Activated B cell treated with CpG ODN at 0.5 μM for 24 hours (primary cell): ENCODE measurements at regions of chr1 and their contacts with region 1.

Region 1: DNA sequence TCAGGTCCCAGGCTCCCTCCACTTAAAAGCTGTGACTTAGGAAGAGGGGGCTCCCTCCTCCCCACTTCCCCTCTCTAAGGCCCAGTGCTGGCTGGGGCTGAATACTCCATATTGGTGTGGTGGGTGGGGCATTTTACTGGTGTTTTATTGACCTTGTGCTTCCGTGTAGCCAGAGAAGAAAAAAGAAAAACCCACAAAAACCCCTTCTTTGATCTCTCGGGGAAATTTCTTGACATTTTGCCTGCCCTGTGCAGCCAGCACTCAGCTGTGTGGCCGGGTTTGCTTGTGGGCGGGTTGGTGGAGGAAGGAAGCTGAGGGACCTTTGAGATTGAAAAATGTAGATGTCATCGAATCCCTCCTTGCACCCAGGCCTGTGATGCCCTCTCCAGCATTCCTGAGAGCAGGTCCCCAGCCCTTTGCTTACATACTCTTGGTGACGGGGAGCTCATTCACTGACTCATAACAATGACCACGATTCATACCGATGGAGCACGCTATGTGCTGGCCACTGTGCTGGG is 24.8 kb downstream of the TNFRSF8 start:
- DNase-seq: peak; percentile 45
- ATAC-seq: peak; percentile 88
- H3K4me3 Mint-ChIP-seq: peak overlapping the region; percentile 53
- H3K27ac Mint-ChIP-seq: peak overlapping the region; percentile 95
- H3K4me1 Mint-ChIP-seq: peaks cover 45% of the 10 kb centered on the region
- H3K27me3 Mint-ChIP-seq: no peaks in the 10 kb centered on the region
- CTCF ChIP-seq: no peak

Region 2: GRCh38 chr1:11388617-11389016 is 699.2 kb before region 1 on chr1:
- CTCF ChIA-PET with region 1: no interaction called
- POLR2A ChIA-PET with region 1: no interaction called
- intact Hi-C with region 1: no loop called
- DNase-seq: no peak
- ATAC-seq: no peak
- H3K4me3 Mint-ChIP-seq: no peak overlapping the region
- H3K27ac Mint-ChIP-seq: no peak overlapping the region
- H3K4me1 Mint-ChIP-seq: no peaks in the 10 kb centered on the region
- H3K27me3 Mint-ChIP-seq: peaks cover 4% of the 10 kb centered on the region
- CTCF ChIP-seq: no peak

Region 3: DNA sequence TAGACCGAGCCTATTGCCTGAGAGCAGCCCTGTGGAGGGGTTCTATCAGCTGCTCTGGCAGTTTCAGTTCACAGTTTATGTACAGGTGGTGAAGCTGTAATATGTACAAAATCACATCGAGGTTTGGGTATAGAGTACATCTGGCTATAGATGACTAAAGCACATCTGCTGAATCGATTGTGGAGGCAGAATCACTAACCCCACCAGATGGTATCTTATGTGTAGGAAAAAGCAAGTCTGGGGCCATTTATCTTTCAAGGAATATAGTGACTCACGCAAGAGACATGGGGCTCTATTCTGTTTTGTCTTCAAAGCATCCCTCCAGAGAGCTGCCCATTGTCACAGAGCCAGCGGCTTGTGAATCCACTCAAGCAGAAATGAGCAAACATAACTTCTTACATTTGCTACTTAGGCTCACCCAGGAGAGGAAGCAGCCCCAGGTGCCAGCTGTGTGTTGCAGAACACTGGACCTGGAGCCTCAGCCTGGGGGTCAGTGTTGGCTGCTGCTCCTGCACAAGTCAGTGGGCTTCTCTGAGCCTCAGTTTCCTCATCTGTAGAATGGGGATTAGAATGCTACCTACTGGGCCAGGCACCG is 47.3 kb before region 1 on chr1:
- CTCF ChIA-PET with region 1: no interaction called
- POLR2A ChIA-PET with region 1: interaction called, 18 read pairs
- intact Hi-C with region 1: no loop called
- DNase-seq: no peak
- ATAC-seq: peak; percentile 85
- H3K4me3 Mint-ChIP-seq: peak overlapping the region; percentile 73
- H3K27ac Mint-ChIP-seq: peak overlapping the region; percentile 88
- H3K4me1 Mint-ChIP-seq: peaks cover 48% of the 10 kb centered on the region
- H3K27me3 Mint-ChIP-seq: no peaks in the 10 kb centered on the region
- CTCF ChIP-seq: no peak

Region 4: DNA sequence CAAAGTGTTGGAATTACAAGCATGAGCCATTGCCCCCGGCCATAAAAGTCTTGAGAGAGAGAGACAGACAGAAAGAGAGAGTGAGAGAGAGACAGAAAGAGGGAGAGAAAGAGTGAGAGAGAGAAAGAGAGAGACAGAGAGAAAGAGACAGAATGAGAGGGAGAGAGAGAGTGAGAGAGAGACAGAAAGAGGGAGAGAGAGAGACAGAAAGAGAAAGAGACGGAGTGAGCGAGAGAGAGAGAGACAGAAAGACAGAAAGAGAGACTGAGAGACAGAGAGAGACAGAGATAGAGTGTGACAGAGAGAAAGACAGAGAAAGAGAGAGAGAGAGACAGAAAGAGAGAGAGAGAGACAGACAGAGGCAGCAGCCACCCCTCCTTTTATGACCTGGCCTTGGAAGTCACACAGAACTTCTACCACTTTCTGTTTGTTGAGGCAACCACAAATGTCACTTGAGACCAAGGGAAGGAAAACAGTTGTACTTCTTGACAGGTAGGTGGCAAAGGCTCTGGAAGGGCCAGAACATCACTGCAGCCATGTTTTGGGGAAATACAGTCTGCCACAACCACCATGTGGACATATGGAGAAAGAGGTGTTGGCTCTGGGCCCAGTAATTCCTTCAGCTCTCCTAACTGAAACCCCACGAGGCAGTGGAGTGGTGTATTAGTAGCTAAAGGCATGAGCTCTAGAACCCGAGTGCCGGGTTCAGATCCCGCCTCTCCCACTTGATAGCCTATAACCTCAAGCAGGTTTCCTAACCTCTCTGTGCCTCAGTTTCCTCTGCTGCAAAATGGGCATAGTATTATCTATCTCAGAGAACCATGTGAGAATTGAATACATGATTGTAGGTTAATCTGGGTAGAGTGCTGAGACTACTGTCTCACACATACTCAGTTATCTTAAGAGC is 25.8 kb after region 1 on chr1:
- CTCF ChIA-PET with region 1: interaction called, 3 read pairs
- POLR2A ChIA-PET with region 1: interaction called, 3 read pairs
- intact Hi-C with region 1: loop called (anchors 1 kb)
- DNase-seq: no peak
- ATAC-seq: no peak
- H3K4me3 Mint-ChIP-seq: no peak overlapping the region
- H3K27ac Mint-ChIP-seq: no peak overlapping the region
- H3K4me1 Mint-ChIP-seq: peaks cover 2% of the 10 kb centered on the region
- H3K27me3 Mint-ChIP-seq: no peaks in the 10 kb centered on the region
- CTCF ChIP-seq: no peak

Region 5: GRCh38 chr1:12141128-12141850 is 53.4 kb after region 1 on chr1:
- CTCF ChIA-PET with region 1: no interaction called
- POLR2A ChIA-PET with region 1: no interaction called
- intact Hi-C with region 1: no loop called
- DNase-seq: no peak
- ATAC-seq: no peak
- H3K4me3 Mint-ChIP-seq: no peak overlapping the region
- H3K27ac Mint-ChIP-seq: peak overlapping the region; percentile 24
- H3K4me1 Mint-ChIP-seq: peaks cover 53% of the 10 kb centered on the region
- H3K27me3 Mint-ChIP-seq: no peaks in the 10 kb centered on the region
- CTCF ChIP-seq: no peak